Heart left ventricle (tissue), 16 donors: ENCODE measurements at regions of chr5 and their contacts with region 1.

Region 1: DNA sequence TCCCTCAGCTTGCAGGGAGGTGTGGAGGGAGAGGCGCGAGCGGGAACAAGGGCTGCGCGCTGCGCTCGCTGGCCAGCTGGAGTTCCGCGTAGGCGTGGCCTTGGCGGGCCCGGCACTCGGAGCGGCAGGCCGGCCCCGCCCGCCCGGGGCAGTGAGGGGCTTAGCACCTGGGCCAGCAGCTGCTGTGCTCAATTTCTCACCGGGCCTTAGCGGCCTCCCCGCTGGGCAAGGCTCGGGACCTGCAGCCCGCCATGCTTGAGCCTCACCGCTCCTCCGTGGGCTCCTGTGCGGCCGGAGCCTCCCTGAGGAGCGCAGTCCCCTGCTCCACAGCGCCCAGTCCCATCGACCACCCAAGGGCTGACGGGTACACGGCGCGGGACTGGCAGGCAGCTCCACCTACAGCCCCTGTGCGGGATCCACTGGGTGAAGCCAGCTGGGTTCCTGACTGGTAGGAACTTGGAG is 1516.4 kb downstream of the EFNA5 start:
- DNase-seq: peak in 1 of 5 donors; percentile 61
- ATAC-seq: no peak
- H3K4me3 ChIP-seq: no peak overlapping the region
- H3K27ac ChIP-seq: no peak overlapping the region
- H3K4me1 ChIP-seq: no peaks in the 10 kb centered on the region
- H3K27me3 ChIP-seq: no peaks in the 10 kb centered on the region
- CTCF ChIP-seq: no peak
- POLR2A ChIP-seq: no peak

Region 2: GRCh38 chr5:106303911-106304310 is 149.6 kb after region 1 on chr5:
- intact Hi-C with region 1: loop called in 1 of 10 experiments (anchors 5 kb)
- DNase-seq: no peak
- ATAC-seq: no peak
- H3K4me3 ChIP-seq: no peak overlapping the region
- H3K27ac ChIP-seq: no peak overlapping the region
- H3K4me1 ChIP-seq: no peaks in the 10 kb centered on the region
- H3K27me3 ChIP-seq: no peaks in the 10 kb centered on the region
- CTCF ChIP-seq: no peak
- POLR2A ChIP-seq: no peak